Gastrocnemius medialis (tissue), 4 donors: ENCODE measurements at regions of chr11 and their contacts with region 1.

Region 1: DNA sequence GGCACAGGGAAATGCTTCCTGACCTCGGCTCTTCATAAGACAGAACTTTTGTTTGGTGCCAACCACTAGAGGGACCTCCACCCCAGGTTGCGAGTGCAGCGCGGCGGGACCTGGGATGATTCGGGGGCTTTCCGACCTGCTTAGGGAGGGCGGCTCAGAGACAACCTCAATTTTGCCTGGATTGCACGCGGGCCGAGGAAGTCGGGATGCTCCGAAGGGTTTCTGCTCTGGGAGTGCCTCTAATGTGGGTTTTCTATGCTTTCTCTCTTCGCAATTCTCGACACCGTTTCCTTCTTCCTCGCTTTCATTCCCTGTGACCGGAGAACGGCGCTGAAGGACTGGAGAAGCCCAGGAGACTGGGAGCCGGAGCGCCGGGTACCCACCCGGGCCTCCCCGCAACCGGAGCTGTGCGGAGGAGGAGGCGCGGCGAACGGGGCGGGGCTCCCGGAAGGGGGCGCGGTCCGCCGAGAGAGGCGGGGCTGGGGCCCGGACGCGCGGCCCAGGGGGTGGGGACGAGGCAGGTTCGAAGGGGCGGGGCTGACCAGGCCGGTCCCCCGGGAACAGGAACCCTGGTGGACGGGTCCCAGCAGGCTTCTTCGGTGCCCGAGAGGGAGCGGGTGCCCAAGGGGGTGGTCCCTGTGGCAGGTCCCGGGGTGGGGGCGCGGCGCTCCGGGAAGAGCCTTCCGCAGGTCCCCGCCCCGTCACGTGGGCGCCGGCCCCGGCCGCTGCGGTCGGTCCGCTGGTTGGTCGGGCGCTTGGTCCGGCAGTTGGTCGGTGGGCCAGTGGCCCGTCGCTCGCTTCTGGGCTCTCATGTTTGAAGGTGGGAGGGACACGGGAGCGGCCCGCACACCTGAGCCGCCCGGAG is at the start of gene PPFIBP2:
- DNase-seq: peak; percentile 77 to 88
- ATAC-seq: peak; percentile 67 to 74
- H3K4me3 ChIP-seq: peak within 1 kb of the TSS; percentile 55 to 89 (median 84)
- H3K27ac ChIP-seq: peak within 1 kb of the TSS; percentile 84 to 95 (median 94)
- H3K4me1 ChIP-seq: peaks cover 31 to 36% of the 10 kb centered on the region in 2 donors
- H3K27me3 ChIP-seq: no peaks in the 10 kb centered on the region
- CTCF ChIP-seq: peak; percentile 72 to 82 (median 75)
- POLR2A ChIP-seq: peak; percentile 88 to 92
- total RNA-seq, gene PPFIBP2: 10.5 to 33.5 (median 25.4) TPM

Region 2: DNA sequence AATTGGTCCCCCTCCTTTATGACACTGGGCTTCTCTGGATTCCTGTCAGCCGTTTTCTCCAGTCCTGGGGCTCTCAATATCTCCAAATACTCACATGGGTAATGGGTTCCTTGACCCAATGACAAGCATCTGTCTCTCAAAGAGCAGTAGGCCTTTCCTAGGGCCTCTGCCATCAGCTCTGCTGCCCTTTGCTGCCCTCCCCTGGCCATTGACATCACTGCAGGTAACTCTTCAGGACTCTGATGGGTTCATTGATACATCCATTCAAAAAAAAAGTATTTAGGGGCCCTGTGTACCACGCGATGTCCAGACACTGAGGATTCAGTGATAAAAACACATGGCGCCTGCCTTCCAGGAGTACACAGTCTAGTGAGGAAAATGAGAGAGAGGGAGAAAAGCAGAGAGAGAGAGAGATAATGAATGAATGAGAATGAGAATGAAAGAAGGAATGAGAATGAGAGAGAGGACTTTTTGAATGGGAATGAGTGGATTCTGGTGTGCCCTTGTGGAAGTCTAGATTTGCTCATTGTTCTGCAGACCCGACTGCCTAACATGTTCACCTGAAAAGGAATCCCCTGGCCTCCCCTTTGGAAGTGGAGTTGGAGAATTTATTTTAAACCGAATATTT is 70.8 kb before region 1 on chr11:
- in situ Hi-C with region 1: no loop called
- intact Hi-C with region 1: loop called (anchors 5 kb)
- DNase-seq: peak; percentile 18 to 39
- ATAC-seq: peak; percentile 51 to 87
- H3K4me3 ChIP-seq: no peak overlapping the region
- H3K27ac ChIP-seq: no peak overlapping the region
- H3K4me1 ChIP-seq: no peaks in the 10 kb centered on the region
- H3K27me3 ChIP-seq: no peaks in the 10 kb centered on the region
- CTCF ChIP-seq: peak; percentile 61 to 86 (median 66)
- POLR2A ChIP-seq: no peak

Region 3: GRCh38 chr11:7495882-7496551 is 17.4 kb before region 1 on chr11:
- in situ Hi-C with region 1: no loop called
- intact Hi-C with region 1: no loop called
- DNase-seq: peak in 1 of 2 donors; percentile 34
- ATAC-seq: peak in 1 of 2 donors; percentile 27
- H3K4me3 ChIP-seq: no peak overlapping the region
- H3K27ac ChIP-seq: no peak overlapping the region
- H3K4me1 ChIP-seq: peaks cover 0 to 4% of the 10 kb centered on the region in 2 donors
- H3K27me3 ChIP-seq: no peaks in the 10 kb centered on the region
- CTCF ChIP-seq: no peak
- POLR2A ChIP-seq: no peak

Region 4: GRCh38 chr11:7555052-7555699 is 41.7 kb after region 1 on chr11:
- in situ Hi-C with region 1: no loop called
- intact Hi-C with region 1: loop called (anchors 2 kb)
- DNase-seq: peak; percentile 84 to 87
- ATAC-seq: peak; percentile 97
- H3K4me3 ChIP-seq: no peak overlapping the region
- H3K27ac ChIP-seq: peak overlapping the region; percentile 80 to 89 (median 82)
- H3K4me1 ChIP-seq: peaks cover 48 to 60% of the 10 kb centered on the region in 2 donors
- H3K27me3 ChIP-seq: no peaks in the 10 kb centered on the region
- CTCF ChIP-seq: no peak
- POLR2A ChIP-seq: no peak

Region 5: DNA sequence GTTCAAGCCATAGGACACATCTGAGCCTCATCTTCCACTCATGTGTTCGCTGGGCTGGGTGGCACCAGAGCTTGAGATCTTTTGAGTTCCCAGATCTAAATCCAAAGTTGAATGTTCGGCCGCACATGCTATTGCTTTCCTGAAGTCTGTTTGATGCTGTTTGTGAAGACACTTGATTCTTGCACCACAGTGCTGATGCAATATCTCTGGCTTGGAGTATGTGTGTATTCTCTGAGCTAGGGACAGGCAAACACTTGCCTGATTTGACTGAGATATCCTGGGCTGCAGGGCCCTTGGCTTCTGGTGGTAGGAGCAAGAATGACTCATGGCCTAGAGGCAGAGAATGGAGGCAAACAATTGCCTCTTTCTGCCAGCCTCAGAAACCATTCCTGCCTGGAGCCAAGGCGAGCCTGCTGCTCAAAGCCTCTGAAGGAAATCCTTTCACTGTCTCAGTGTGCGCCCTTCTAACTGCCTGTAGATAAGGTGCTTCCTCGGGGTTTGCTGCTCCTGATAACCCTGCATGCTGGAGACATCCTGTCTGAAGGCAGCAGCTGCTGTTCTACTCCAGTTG is 86.8 kb after region 1 on chr11:
- in situ Hi-C with region 1: no loop called
- intact Hi-C with region 1: loop called (anchors 1 kb)
- DNase-seq: peak; percentile 80 to 90
- ATAC-seq: peak; percentile 92 to 96
- H3K4me3 ChIP-seq: no peak overlapping the region
- H3K27ac ChIP-seq: peak overlapping the region; percentile 82 to 85 (median 83)
- H3K4me1 ChIP-seq: peaks cover 36 to 43% of the 10 kb centered on the region in 2 donors
- H3K27me3 ChIP-seq: no peaks in the 10 kb centered on the region
- CTCF ChIP-seq: no peak
- POLR2A ChIP-seq: no peak

Region 6: GRCh38 chr11:7621090-7621489 is 107.6 kb after region 1 on chr11:
- in situ Hi-C with region 1: no loop called
- intact Hi-C with region 1: no loop called
- DNase-seq: no peak
- ATAC-seq: no peak
- H3K4me3 ChIP-seq: no peak overlapping the region
- H3K27ac ChIP-seq: no peak overlapping the region
- H3K4me1 ChIP-seq: peaks cover 0 to 4% of the 10 kb centered on the region in 2 donors
- H3K27me3 ChIP-seq: no peaks in the 10 kb centered on the region
- CTCF ChIP-seq: no peak
- POLR2A ChIP-seq: no peak

Region 7: DNA sequence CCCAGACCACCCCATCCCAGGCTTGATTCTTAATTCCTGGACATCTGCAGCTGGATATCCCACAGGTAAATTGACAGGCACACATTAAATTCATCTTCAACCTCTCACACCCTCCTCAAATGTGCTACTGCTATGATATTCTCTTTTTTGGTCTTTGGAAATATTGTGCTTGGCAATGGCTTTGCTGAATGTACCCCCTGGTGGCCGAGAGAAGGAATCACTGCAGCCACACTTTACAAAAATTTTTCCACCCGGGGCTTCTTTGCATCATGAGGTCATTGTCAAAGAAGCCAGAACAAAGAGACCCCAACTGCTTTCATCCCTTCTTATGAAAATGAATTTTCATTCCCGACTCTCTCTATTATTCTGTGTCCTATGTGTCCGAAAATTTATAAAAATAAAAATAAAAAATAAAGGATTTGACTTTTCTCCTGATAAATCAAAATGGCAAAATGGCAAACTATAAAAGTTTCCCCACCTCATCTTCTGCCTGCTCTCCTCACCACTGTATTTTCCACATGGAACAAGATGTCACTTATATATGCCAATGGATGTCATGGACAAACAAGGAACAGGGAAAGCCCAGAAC is 174.9 kb after region 1 on chr11:
- in situ Hi-C with region 1: no loop called
- intact Hi-C with region 1: loop called (anchors 5 kb)
- DNase-seq: no peak
- ATAC-seq: no peak
- H3K4me3 ChIP-seq: no peak overlapping the region
- H3K27ac ChIP-seq: no peak overlapping the region
- H3K4me1 ChIP-seq: peaks cover 12 to 13% of the 10 kb centered on the region in 2 donors
- H3K27me3 ChIP-seq: no peaks in the 10 kb centered on the region
- CTCF ChIP-seq: peak in 3 of 5 experiments; percentile 35 to 66 (median 60)
- POLR2A ChIP-seq: no peak